ENCODE measurements at regions of chr19 and their contacts with region 1.

Region 1: GRCh38 chr19:41431426-41432386 is 4.5 kb upstream of the B3GNT8 start:
- DNase-seq: no peak
- H3K4me3 ChIP-seq: no peak overlapping the region
- H3K27ac ChIP-seq: no peak overlapping the region
- H3K4me1 ChIP-seq: no peaks in the 10 kb centered on the region
- H3K27me3 ChIP-seq: no peaks in the 10 kb centered on the region
- CTCF ChIP-seq: peak; percentile 15

Region 2: GRCh38 chr19:41397086-41398049 is 34.3 kb before region 1 on chr19 and contains the starts of genes BCKDHA and EXOSC5:
- intact Hi-C with region 1: loop called (anchors 5 kb)
- DNase-seq: peak; percentile 99
- H3K4me3 ChIP-seq: peak within 1 kb of the TSS; percentile 83
- H3K27ac ChIP-seq: peak within 1 kb of the TSS; percentile 74
- H3K4me1 ChIP-seq: peaks cover 6% of the 10 kb centered on the region
- H3K27me3 ChIP-seq: no peaks in the 10 kb centered on the region
- CTCF ChIP-seq: no peak
- total RNA-seq, gene BCKDHA: 18.8 to 31.7 TPM
- total RNA-seq, gene EXOSC5: 11.5 to 33.5 TPM

Measured in colonic mucosa (tissue), 4 donors.